ENCODE measurements at regions of chr2 and their contacts with region 1.

Region 1: GRCh38 chr2:174697255-174697654 is 67.0 kb downstream of the CHRNA1 start:
- DNase-seq: peak; percentile 45 to 89 (median 75)

Region 2: GRCh38 chr2:174465327-174465726 is 231.9 kb before region 1 on chr2:
- intact Hi-C with region 1: loop called (anchors 10 kb)
- DNase-seq: peak in 1 of 42 donors; percentile 7

Region 3: DNA sequence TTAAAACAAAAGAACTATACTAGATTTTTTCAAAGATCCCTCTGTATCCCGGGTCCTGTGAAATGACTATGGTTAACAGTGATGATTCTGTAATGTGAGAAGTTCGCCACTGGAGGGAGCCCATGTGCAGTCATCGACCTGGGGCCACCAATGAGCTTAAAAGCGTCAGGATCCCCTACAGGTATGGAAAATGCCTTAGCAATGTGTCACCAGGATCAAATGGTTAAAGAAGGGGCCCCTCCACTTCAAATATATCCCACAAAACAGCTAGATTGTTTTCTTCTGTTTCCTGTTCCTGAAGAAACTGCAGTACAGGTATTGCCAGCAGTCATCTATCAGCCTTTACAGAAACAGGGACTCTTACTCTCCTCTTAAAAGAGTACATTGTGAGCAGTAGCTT is 51.7 kb after region 1 on chr2:
- intact Hi-C with region 1: no loop called
- DNase-seq: peak; percentile 50 to 92 (median 80)

Region 4: GRCh38 chr2:174985630-174986029 is 288.4 kb after region 1 on chr2:
- intact Hi-C with region 1: loop called (anchors 10 kb)
- DNase-seq: peak in 2 of 42 donors; percentile 23 to 46